ENCODE measurements at regions of chr11 and their contacts with region 1.

Region 1: DNA sequence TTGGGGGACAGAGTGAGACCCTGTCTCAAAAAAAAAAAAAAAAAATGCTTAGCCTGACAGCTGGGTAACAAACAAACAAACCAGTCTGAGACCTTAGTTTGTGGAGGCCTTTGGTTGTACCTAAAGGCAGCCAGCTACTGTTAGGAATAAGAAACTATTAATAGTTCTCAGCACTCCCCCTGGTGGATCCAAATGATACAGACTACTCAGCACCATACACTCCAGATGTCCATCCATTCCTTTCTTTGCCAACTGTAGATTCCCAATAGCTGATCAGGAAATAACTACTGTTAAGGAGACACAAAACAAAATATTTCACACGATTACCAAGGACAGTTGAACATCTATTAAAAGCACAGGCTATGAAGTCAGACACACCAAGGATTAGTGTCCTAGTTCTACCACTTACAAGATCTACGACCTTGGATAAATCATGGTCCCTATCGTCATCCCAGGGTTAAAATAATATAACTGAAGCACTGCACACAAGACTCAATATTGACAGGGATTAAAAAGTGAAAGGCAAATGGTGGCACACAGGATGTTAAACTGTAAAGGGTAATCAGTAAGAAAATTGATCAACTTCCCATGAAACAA is 17.2 kb downstream of the CLDN25 start:
- DNase-seq: peak; percentile 65
- H3K4me3 ChIP-seq: peak overlapping the region in 1 of 2 experiments; percentile 39; a peak in 1 of 4 replicates
- H3K27ac ChIP-seq: no peak overlapping the region
- H3K4me1 ChIP-seq: peaks cover 0 to under 1% of the 10 kb centered on the region in 2 experiments; a peak in 1 of 4 replicates
- H3K27me3 ChIP-seq: no peaks in the 10 kb centered on the region
- CTCF ChIP-seq: peak; percentile 71
- EP300 ChIP-seq: no peak
- RAD21 ChIP-seq: peak; percentile 60

Region 2: DNA sequence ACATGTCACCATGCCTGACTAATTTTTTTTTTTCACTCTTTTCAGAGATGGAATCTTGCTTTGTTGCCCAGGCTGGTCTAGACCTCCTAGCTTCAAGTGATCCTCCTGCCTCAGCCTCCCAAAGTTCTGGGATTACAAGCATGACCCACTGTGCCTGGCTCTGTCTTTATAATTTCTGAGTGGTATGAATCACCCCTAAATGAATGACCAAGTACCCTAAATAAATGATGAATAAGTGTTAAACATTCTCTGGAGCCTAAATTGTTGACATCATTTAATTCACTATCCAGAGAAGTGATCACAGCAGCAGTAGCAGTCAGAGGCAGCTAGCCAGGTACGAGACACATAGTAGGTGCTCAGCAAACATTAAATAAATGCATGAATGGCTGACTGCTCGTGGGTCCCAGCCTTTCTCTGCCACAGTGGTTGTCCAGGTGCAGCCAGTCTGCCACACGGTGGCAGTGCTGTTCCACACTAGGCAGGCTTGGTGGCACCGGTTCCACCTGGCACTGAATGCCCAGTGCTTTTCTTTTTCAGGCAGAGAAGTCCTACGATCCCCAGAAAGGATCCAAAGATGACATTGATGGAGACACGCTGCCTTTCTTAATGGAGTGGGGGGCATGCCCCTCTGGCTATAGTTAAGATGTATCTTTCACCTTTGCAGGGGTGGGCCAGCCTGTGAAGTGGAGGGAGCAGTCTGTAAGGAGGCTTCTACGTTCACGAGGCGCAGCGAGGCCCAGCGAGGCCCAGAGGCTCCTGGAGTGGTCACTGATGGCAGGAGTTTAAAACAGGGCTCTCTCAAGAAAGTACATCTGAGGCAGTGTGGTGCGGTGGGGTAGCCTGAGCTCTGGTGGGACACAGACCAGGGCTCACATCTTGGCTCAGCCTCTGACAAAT is 491.1 kb before region 1 on chr11:
- CTCF ChIA-PET with region 1: interaction called, 14 read pairs
- POLR2A ChIA-PET with region 1: no interaction called
- DNase-seq: peak; percentile 81
- H3K4me3 ChIP-seq: peak overlapping the region in 1 of 2 experiments; percentile 14; a peak in 1 of 4 replicates
- H3K27ac ChIP-seq: no peak overlapping the region
- H3K4me1 ChIP-seq: peaks cover 0 to 2% of the 10 kb centered on the region in 2 experiments; a peak in 1 of 4 replicates
- H3K27me3 ChIP-seq: no peaks in the 10 kb centered on the region
- CTCF ChIP-seq: peak; percentile 94
- EP300 ChIP-seq: no peak
- RAD21 ChIP-seq: peak; percentile 99

Region 3: DNA sequence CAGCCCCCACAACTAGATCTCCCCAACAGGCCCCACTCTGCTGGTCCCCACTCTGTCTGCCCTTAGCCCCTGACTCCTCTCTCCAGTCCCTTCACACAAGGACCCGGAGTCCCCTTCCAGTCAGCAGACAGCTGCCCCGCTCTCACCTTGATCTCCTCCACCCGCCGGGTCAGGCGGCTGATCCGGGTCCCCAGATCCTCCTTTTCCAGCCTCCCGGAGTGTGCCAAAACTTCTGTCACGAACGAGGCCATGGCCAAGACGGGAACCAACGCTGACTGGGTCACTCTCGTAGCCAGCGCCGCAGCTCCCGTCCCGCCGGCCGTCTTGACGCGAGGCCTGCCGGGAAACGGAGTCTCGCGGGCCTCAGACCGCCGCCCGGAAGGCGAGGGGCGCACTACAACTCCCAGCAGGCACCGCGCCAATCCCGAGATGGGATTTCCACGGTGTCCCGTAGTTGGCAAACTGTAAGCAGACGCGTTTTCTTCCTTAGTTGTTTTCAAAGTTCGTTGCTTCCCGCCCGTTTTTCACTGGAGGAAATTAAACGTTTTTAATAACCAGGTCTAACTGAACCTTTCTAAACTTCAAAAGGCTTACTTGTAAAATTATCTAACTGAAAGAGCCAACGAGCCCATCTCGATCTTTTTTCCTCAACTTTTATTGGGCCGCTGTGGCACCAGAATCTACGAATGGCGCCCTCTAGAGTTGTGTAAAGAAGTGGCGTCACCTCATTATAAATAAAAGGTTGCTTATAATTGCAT is 23.2 kb before region 1 on chr11 and contains the start of gene ZW10:
- CTCF ChIA-PET with region 1: interaction called, 12 read pairs
- POLR2A ChIA-PET with region 1: no interaction called
- DNase-seq: peak; percentile 90
- H3K4me3 ChIP-seq: peak within 1 kb of the TSS; percentile 76 to 89
- H3K27ac ChIP-seq: peak within 1 kb of the TSS; percentile 58 to 73
- H3K4me1 ChIP-seq: peaks cover 3 to 9% of the 10 kb centered on the region in 2 experiments; a peak in 3 of 4 replicates
- H3K27me3 ChIP-seq: no peaks in the 10 kb centered on the region
- CTCF ChIP-seq: peak; percentile 99
- EP300 ChIP-seq: peak in 1 of 2 experiments; percentile 13; a peak in 1 of 4 replicates
- RAD21 ChIP-seq: peak; percentile 45; the same call in 1 of the 2 replicates
- polyA plus RNA-seq, gene ZW10: 6.1 and 7.7 TPM in 2 replicates

Region 4: GRCh38 chr11:113781679-113782078 is 15.1 kb before region 1 on chr11:
- CTCF ChIA-PET with region 1: interaction called, 17 read pairs
- POLR2A ChIA-PET with region 1: no interaction called
- DNase-seq: no peak
- H3K4me3 ChIP-seq: no peak overlapping the region
- H3K27ac ChIP-seq: no peak overlapping the region
- H3K4me1 ChIP-seq: peaks cover 0 to 6% of the 10 kb centered on the region in 2 experiments; a peak in 3 of 4 replicates
- H3K27me3 ChIP-seq: no peaks in the 10 kb centered on the region
- CTCF ChIP-seq: no peak
- EP300 ChIP-seq: no peak
- RAD21 ChIP-seq: no peak

Measured in SK-N-SH (cell line).